PC-9 (cell line): ENCODE measurements at regions of chr13 and their contacts with region 1.

Region 1: GRCh38 chr13:23743267-23743666 is 145.9 kb downstream of the MIPEP start:
- DNase-seq: no peak
- H3K4me3 ChIP-seq: no peak overlapping the region
- H3K27ac ChIP-seq: no peak overlapping the region
- H3K4me1 ChIP-seq: no peaks in the 10 kb centered on the region
- H3K27me3 ChIP-seq: no peaks in the 10 kb centered on the region
- CTCF ChIP-seq: no peak

Region 2: DNA sequence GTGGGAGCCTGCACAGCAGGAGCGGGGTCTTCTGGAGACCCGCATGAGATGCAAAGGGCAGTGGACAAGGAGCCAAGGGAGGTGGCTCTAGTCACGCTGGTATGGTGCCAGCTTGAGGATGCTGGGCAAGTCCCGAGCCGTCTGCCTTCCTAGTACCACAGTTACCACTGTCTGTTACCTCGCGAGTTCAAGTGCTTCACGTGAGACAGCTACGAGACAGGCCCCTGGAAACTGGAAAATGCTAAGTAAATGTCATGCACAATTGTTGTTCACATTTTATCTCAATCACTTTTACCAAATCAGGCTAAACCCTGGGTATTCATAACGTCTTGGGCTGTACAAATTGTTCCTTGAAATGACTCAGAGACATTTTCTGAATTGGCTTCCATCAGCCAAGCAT is 17.3 kb before region 1 on chr13:
- CTCF ChIA-PET with region 1: no interaction called
- POLR2A ChIA-PET with region 1: interaction called, 15 read pairs
- intact Hi-C with region 1: no loop called
- DNase-seq: no peak
- H3K4me3 ChIP-seq: no peak overlapping the region
- H3K27ac ChIP-seq: no peak overlapping the region
- H3K4me1 ChIP-seq: no peaks in the 10 kb centered on the region
- H3K27me3 ChIP-seq: no peaks in the 10 kb centered on the region
- CTCF ChIP-seq: no peak